A673 (cell line): ENCODE measurements at regions of chr16 and their contacts with region 1.

Region 1: GRCh38 chr16:67150833-67151396 is at the start of gene B3GNT9:
- DNase-seq: peak; percentile 88
- H3K4me3 ChIP-seq: peak within 1 kb of the TSS; percentile 83
- H3K27ac ChIP-seq: peak within 1 kb of the TSS; percentile 81
- H3K4me1 ChIP-seq: peaks cover 13% of the 10 kb centered on the region
- H3K27me3 ChIP-seq: no peaks in the 10 kb centered on the region
- CTCF ChIP-seq: no peak
- total RNA-seq, gene B3GNT9: 11.5 and 13.8 TPM in 2 replicates

Region 2: DNA sequence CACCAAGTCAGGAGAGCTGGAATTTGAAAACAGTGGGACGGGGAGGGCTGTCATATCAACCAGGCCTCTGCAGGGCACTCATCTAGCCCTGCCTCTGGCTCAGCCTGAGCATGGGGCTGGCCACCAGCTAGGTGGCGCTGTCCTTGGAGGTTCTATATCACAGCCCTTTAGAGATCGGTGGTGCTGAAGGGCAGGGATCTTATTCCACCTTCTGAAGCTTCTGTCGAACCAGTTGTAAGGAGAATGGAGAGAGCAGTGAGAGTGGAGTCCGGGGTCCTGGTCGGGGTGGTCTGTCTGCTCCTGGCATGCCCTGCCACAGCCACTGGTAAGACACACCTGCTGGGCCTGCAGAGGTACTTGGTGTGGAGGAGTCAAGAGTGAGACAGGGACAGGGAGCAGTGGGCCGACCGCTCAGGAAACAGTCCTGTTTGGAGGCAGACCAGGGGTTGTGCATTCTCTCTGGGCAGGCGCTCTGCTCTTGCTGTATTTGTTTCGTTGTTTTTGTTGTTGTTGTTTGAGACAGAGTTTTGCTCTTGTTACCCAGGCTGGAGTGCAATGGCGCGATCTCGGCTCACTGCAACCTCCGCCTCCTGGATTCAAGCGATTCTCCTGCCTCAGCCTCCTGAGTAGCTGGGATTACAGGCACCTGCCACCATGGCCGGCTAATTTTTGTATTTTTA is 189.7 kb before region 1 on chr16 and contains the start of gene CES3:
- CTCF ChIA-PET with region 1: interaction called, 10 read pairs
- POLR2A ChIA-PET with region 1: no interaction called
- intact Hi-C with region 1: loop called (anchors 5 kb)
- DNase-seq: peak; percentile 88
- H3K4me3 ChIP-seq: peak within 1 kb of the TSS; percentile 30
- H3K27ac ChIP-seq: no peak within 1 kb of the TSS
- H3K4me1 ChIP-seq: peaks cover 4% of the 10 kb centered on the region
- H3K27me3 ChIP-seq: no peaks in the 10 kb centered on the region
- CTCF ChIP-seq: peak; percentile 99
- total RNA-seq, gene CES3: 3.0 and 3.9 TPM in 2 replicates

Region 3: GRCh38 chr16:67017810-67018488 is 133.0 kb before region 1 on chr16:
- CTCF ChIA-PET with region 1: interaction called, 39 read pairs
- POLR2A ChIA-PET with region 1: interaction called, 7 read pairs
- intact Hi-C with region 1: loop called (anchors 2 kb)
- DNase-seq: peak; percentile 96
- H3K4me3 ChIP-seq: no peak overlapping the region
- H3K27ac ChIP-seq: no peak overlapping the region
- H3K4me1 ChIP-seq: peaks cover 18% of the 10 kb centered on the region
- H3K27me3 ChIP-seq: no peaks in the 10 kb centered on the region
- CTCF ChIP-seq: peak; percentile 96